ENCODE measurements at regions of chr18 and their contacts with region 1.

Region 1: GRCh38 chr18:45879681-45880655 is 54.5 kb downstream of the SIGLEC15 start:
- DNase-seq: peak; percentile 71
- ATAC-seq: peak; percentile 91
- H3K4me3 Mint-ChIP-seq: no peak overlapping the region
- H3K27ac Mint-ChIP-seq: no peak overlapping the region
- H3K4me1 Mint-ChIP-seq: peaks cover 10% of the 10 kb centered on the region
- H3K27me3 Mint-ChIP-seq: no peaks in the 10 kb centered on the region

Region 2: DNA sequence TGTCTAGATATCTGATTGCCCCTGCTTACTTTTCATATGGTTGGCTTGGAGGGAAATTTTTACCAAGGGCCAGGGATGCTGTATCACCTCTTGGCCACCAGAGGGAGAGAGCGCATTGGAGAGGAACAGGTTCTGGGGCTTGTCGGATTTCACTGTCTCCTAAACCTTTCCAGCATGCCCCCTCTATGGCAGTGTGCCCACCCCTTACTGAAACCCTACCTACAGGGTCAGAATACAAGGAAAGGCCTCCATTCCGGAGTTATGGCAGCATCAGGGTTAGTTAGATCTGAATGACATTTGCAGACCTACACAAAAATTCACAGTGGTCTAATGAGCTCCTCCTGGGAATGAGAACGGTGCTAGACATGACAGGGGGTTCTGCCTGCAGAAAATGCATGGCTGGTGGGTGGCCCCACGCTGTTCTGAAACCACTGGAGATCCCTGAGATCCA is 258.9 kb before region 1 on chr18:
- CTCF ChIA-PET with region 1: interaction called, 14 read pairs
- DNase-seq: peak; percentile 54
- ATAC-seq: peak; percentile 55
- H3K4me3 Mint-ChIP-seq: no peak overlapping the region
- H3K27ac Mint-ChIP-seq: no peak overlapping the region
- H3K4me1 Mint-ChIP-seq: no peaks in the 10 kb centered on the region
- H3K27me3 Mint-ChIP-seq: peaks cover 18% of the 10 kb centered on the region

Region 3: GRCh38 chr18:45690975-45691815 is 188.8 kb before region 1 on chr18:
- CTCF ChIA-PET with region 1: interaction called, 49 read pairs
- DNase-seq: peak; percentile 84
- ATAC-seq: no peak
- H3K4me3 Mint-ChIP-seq: no peak overlapping the region
- H3K27ac Mint-ChIP-seq: no peak overlapping the region
- H3K4me1 Mint-ChIP-seq: peaks cover 51% of the 10 kb centered on the region
- H3K27me3 Mint-ChIP-seq: peaks cover 5% of the 10 kb centered on the region

Region 4: DNA sequence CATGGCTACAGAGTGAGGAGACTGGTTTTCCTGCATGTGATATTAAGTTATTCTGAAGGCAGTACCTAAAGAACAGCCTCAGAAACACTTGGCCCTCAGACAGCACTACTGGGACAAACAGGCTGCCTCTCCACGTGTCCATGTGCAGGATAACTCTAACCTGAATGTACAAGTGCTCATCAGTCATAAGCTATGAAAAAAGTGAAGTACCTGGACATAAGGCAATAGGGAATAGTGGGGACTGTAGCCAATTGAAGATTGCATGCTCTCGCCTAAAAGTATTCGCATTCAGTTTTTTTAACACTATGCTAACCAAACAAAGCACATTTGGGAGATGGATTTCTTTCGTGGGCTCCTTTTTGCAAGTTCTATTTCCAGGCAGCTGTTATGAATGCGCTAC is 123.0 kb before region 1 on chr18:
- CTCF ChIA-PET with region 1: no interaction called
- DNase-seq: no peak
- ATAC-seq: no peak
- H3K4me3 Mint-ChIP-seq: no peak overlapping the region
- H3K27ac Mint-ChIP-seq: no peak overlapping the region
- H3K4me1 Mint-ChIP-seq: peaks cover 3% of the 10 kb centered on the region
- H3K27me3 Mint-ChIP-seq: peaks cover 17% of the 10 kb centered on the region

Region 5: GRCh38 chr18:45856531-45856930 is 23.4 kb before region 1 on chr18:
- CTCF ChIA-PET with region 1: interaction called, 10 read pairs
- DNase-seq: no peak
- ATAC-seq: no peak
- H3K4me3 Mint-ChIP-seq: no peak overlapping the region
- H3K27ac Mint-ChIP-seq: no peak overlapping the region
- H3K4me1 Mint-ChIP-seq: no peaks in the 10 kb centered on the region
- H3K27me3 Mint-ChIP-seq: no peaks in the 10 kb centered on the region

Region 6: DNA sequence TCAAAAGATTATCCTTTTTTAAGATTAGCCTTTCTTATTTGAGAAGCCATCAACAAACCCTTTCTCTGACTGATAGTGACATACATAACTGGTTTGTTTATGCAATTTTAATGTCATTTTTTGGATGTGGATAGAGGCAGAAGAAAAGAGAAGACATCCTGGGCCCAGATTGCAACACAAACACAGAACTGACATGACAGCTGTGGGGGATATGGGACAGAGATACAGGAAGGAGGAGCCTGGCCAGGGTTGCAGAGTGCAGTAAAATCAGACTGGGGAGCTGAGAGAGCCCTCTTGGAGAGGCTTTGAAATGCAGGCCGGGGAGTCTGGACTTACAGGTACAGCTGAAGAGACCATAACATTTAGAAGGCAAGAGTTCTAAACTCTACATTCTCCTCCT is 10.6 kb after region 1 on chr18:
- CTCF ChIA-PET with region 1: interaction called, 27 read pairs
- DNase-seq: no peak
- ATAC-seq: no peak
- H3K4me3 Mint-ChIP-seq: no peak overlapping the region
- H3K27ac Mint-ChIP-seq: no peak overlapping the region
- H3K4me1 Mint-ChIP-seq: peaks cover 3% of the 10 kb centered on the region
- H3K27me3 Mint-ChIP-seq: no peaks in the 10 kb centered on the region

Region 7: DNA sequence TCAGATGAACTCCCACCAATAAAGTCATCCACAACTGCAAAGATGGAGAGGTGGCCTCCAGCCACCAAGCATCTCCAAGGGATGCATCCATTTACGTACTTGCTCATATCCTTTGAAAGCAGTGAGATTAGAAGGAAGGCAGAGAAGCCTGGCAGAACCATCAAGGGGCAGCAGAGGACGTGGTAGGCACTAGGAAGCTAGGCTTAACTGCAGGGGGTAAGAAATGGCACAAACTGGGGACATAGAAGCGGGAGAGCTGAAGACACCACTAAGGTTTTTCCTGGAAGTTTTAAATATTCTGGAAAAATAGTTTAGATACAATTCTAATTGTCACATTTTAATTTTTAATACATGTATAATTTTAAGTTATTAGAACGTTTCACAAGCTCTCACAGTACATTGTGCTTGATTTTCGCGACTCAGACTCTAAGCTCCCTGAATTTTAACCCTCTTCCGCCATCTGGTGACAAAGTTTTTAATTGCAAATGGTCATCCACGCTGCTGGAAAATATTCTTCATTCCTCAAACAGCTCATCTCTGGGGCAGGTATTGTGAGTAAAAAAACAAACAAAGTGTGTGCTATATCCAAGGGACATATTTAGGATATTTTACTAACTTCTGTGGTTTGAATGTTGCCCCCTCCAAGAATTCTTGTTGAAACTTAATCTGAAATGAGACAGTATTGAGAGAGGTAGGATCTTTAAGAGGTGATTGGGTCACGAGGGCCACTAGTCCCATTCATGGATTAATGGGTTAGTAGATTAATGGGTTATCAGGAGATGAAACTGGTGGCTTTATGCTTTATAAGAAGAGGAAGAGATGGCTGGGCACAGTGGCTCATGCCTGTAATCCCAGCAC is 193.7 kb after region 1 on chr18:
- CTCF ChIA-PET with region 1: interaction called, 30 read pairs
- DNase-seq: peak; percentile 59
- ATAC-seq: peak; percentile 58
- H3K4me3 Mint-ChIP-seq: no peak overlapping the region
- H3K27ac Mint-ChIP-seq: peak overlapping the region; percentile 33
- H3K4me1 Mint-ChIP-seq: peaks cover 29% of the 10 kb centered on the region
- H3K27me3 Mint-ChIP-seq: peaks cover 6% of the 10 kb centered on the region

Measured in activated CD8-positive, alpha-beta memory T cell treated with anti-CD3 and anti-CD28 coated beads, Interleukin-2, amount 10 ng/mL, durations not matched to agents 7 days and 5 days (primary cell).